Activated naive CD8-positive, alpha-beta T cell treated with anti-CD3 and anti-CD28 coated beads, Interleukin-2, amount 10 ng/mL, durations not matched to agents 7 days and 5 days (primary cell): ENCODE measurements at regions of chr18 and their contacts with region 1.

Region 1: DNA sequence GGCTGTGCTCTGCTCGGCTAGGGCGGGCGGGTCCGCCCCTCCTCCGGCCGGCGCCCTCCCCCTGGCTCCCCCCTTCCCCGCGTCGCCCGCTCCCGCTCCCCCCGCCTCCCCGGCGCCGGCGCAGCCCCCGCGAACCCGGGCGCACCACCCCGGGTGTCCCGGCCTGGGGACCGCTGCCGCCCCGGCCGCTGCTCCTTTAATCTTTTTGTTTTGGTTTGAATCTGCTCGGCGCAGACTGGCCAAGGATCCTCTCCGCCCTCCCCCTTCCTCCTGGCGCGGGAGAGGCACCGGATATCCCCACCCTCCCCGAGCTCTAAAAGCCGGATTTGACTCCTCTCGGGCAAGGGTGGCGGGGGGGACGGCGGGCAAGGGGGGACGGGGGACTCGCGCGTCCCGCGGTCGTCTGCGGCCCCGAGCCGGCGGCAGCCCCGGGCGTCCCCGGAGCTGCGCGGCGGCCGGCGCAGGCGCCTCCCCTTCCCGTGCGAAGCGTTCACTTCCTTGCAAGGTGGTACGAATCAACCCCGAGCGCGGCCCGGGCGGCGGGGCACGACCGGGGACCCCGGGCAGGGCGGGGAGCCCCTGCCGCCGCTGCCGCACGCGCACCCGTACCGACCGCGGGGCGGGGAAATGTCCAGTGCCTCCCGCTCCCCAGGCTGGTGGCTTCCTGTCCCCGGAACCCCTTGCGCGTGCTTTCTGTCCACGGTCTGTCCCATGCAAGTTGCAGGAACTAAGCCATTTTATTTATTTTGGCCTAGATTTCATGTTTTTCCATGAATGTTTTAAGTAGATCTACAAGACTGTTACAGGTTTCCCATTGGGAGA is at the start of gene PTGR3:
- DNase-seq: peak; percentile 84
- ATAC-seq: peak; percentile 66
- H3K4me3 Mint-ChIP-seq: peak within 1 kb of the TSS; percentile 94
- H3K27ac Mint-ChIP-seq: peak within 1 kb of the TSS; percentile 98
- H3K4me1 Mint-ChIP-seq: peaks cover 49% of the 10 kb centered on the region
- H3K27me3 Mint-ChIP-seq: peaks cover 33% of the 10 kb centered on the region
- total RNA-seq, gene PTGR3: 36.6 to 37.2 TPM

Region 2: GRCh38 chr18:75070625-75071483 is 138.5 kb before region 1 on chr18:
- POLR2A ChIA-PET with region 1: interaction called, 14 read pairs
- DNase-seq: peak; percentile 70
- ATAC-seq: peak; percentile 89
- H3K4me3 Mint-ChIP-seq: peak overlapping the region; percentile 87
- H3K27ac Mint-ChIP-seq: peak overlapping the region; percentile 99
- H3K4me1 Mint-ChIP-seq: peaks cover 17% of the 10 kb centered on the region
- H3K27me3 Mint-ChIP-seq: no peaks in the 10 kb centered on the region

Region 3: GRCh38 chr18:75244351-75245313 is 35.3 kb after region 1 on chr18:
- POLR2A ChIA-PET with region 1: interaction called, 41 read pairs
- DNase-seq: no peak
- ATAC-seq: no peak
- H3K4me3 Mint-ChIP-seq: no peak overlapping the region
- H3K27ac Mint-ChIP-seq: no peak overlapping the region
- H3K4me1 Mint-ChIP-seq: peaks cover 32% of the 10 kb centered on the region
- H3K27me3 Mint-ChIP-seq: no peaks in the 10 kb centered on the region